Mammary epithelial cell (primary cell): ENCODE measurements at regions of chr20 and their contacts with region 1.

Region 1: DNA sequence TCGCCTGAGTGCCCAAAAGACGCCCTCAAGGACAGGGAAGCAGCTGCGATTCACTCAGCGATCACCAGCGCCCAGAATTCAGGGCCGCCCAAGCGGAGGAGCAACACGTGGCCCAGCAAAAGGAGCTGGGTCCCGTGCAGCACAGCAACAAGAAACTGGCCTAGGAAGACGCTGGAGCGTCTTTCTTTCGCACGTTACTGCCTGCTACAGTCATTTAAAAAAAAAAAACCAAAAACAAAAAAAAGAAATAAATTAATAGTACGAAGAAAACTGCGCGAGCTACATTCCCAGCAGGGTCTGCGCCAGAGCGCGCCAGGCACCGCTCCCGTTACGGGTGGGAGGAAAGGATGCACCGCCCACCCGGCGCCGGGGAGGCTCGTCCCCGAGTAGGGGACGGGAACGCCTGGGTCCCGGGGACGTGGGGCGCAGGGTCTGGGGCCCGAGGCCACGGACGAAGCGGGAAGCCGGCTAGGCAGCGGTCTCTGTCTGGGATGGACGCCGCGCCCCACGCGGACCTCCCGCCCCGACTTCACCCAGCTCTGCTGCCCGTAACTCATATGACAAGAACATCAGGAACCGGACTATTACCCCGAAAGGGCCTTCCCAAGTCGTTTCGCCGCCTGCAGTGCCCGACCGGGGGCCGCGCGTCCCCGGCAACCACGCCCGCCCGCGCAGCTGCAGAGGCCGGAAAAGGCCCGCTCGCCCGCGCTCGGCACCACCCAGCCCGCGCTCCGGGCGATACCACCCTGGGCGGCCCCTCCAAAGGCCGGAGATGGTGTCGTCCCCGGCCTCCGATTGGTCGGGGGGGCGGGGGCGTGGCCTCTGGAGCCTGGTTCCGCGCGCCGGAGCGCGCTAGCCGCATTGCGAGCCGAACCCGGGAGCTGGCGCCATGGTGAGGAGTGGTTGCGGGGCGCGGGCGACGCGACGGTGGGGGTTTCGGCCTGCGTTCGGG is at the start of gene NOP56:
- DNase-seq: peak; percentile 90
- H3K4me3 ChIP-seq: peak within 1 kb of the TSS; percentile 93 to 98 (median 95)
- H3K27ac ChIP-seq: peak within 1 kb of the TSS; percentile 77
- H3K4me1 ChIP-seq: peaks cover 23% of the 10 kb centered on the region
- H3K27me3 ChIP-seq: no peaks in the 10 kb centered on the region
- CTCF ChIP-seq: no peak
- total RNA-seq, gene NOP56: 101 to 297 TPM

Region 2: GRCh38 chr20:2470423-2471193 is 181.4 kb before region 1 on chr20 and contains the start of gene SNRPB:
- CTCF ChIA-PET with region 1: no interaction called
- dilution Hi-C with region 1: no loop called
- in situ Hi-C with region 1: no loop called
- intact Hi-C with region 1: loop called (anchors 1 kb)
- DNase-seq: peak; percentile 98
- H3K4me3 ChIP-seq: peak within 1 kb of the TSS; percentile 73 to 94 (median 83)
- H3K27ac ChIP-seq: peak within 1 kb of the TSS; percentile 88
- H3K4me1 ChIP-seq: peaks cover 19% of the 10 kb centered on the region
- H3K27me3 ChIP-seq: no peaks in the 10 kb centered on the region
- CTCF ChIP-seq: no peak
- total RNA-seq, gene SNRPB: 90.7 to 216 TPM

Region 3: GRCh38 chr20:2508631-2509467 is 143.2 kb before region 1 on chr20 and contains the start of gene ZNF343:
- CTCF ChIA-PET with region 1: no interaction called
- dilution Hi-C with region 1: no loop called
- in situ Hi-C with region 1: loop called in 1 of 2 experiments (anchors 25 kb)
- intact Hi-C with region 1: loop called (anchors 5 kb)
- DNase-seq: peak; percentile 78
- H3K4me3 ChIP-seq: peak within 1 kb of the TSS; percentile 73 to 87 (median 84)
- H3K27ac ChIP-seq: peak within 1 kb of the TSS; percentile 43
- H3K4me1 ChIP-seq: peaks cover 7% of the 10 kb centered on the region
- H3K27me3 ChIP-seq: no peaks in the 10 kb centered on the region
- CTCF ChIP-seq: peak in 1 of 2 donors; percentile 4
- total RNA-seq, gene ZNF343: 12.0 to 12.9 TPM

Region 4: GRCh38 chr20:2523919-2524708 is 127.9 kb before region 1 on chr20:
- CTCF ChIA-PET with region 1: interaction called, 9 read pairs
- dilution Hi-C with region 1: no loop called
- in situ Hi-C with region 1: loop called (anchors 10 to 25 kb)
- intact Hi-C with region 1: loop called (anchors 1 kb)
- DNase-seq: peak; percentile 40
- H3K4me3 ChIP-seq: peak overlapping the region; percentile 67 to 91 (median 83)
- H3K27ac ChIP-seq: peak overlapping the region; percentile 34
- H3K4me1 ChIP-seq: peaks cover 6% of the 10 kb centered on the region
- H3K27me3 ChIP-seq: no peaks in the 10 kb centered on the region
- CTCF ChIP-seq: peak; percentile 76 to 94

Region 5: GRCh38 chr20:2619961-2620595 is 32.0 kb before region 1 on chr20:
- CTCF ChIA-PET with region 1: no interaction called
- dilution Hi-C with region 1: no loop called
- in situ Hi-C with region 1: no loop called
- intact Hi-C with region 1: no loop called
- DNase-seq: peak; percentile 68
- H3K4me3 ChIP-seq: no peak overlapping the region
- H3K27ac ChIP-seq: no peak overlapping the region
- H3K4me1 ChIP-seq: no peaks in the 10 kb centered on the region
- H3K27me3 ChIP-seq: no peaks in the 10 kb centered on the region
- CTCF ChIP-seq: no peak

Region 6: GRCh38 chr20:2663887-2664719 is 12.1 kb after region 1 on chr20 and contains the start of gene IDH3B:
- CTCF ChIA-PET with region 1: no interaction called
- dilution Hi-C with region 1: no loop called
- in situ Hi-C with region 1: no loop called
- intact Hi-C with region 1: loop called (anchors 1 kb)
- DNase-seq: peak; percentile 87
- H3K4me3 ChIP-seq: peak within 1 kb of the TSS; percentile 83 to 93 (median 93)
- H3K27ac ChIP-seq: peak within 1 kb of the TSS; percentile 96
- H3K4me1 ChIP-seq: peaks cover 12% of the 10 kb centered on the region
- H3K27me3 ChIP-seq: no peaks in the 10 kb centered on the region
- CTCF ChIP-seq: no peak
- total RNA-seq, gene IDH3B: 50.0 to 78.5 TPM

Region 7: DNA sequence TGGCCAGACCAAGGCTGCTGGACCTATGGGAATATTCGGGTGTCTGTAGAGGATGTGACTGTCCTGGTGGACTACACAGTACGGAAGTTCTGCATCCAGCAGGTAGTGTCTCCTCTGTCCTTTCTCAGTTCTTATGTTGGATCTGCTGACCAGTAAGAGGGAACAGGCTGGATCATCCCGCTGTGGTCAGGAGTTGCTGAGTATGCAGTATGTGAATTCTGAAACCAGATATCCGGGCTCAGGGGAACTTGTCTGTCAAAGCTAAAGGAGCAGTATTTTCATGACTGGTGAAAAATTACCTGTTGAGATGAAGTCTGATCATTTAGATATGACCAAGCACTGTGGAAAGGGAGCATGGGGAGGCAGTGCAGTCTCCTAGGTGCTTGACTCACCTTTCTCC is 369.3 kb after region 1 on chr20:
- CTCF ChIA-PET with region 1: no interaction called
- dilution Hi-C with region 1: no loop called
- in situ Hi-C with region 1: no loop called
- intact Hi-C with region 1: no loop called
- DNase-seq: no peak
- H3K4me3 ChIP-seq: no peak overlapping the region
- H3K27ac ChIP-seq: no peak overlapping the region
- H3K4me1 ChIP-seq: no peaks in the 10 kb centered on the region
- H3K27me3 ChIP-seq: no peaks in the 10 kb centered on the region
- CTCF ChIP-seq: no peak